Activated B cell treated with CpG ODN at 0.5 μM for 24 hours (primary cell): ENCODE measurements at regions of chr17 and their contacts with region 1.

Region 1: DNA sequence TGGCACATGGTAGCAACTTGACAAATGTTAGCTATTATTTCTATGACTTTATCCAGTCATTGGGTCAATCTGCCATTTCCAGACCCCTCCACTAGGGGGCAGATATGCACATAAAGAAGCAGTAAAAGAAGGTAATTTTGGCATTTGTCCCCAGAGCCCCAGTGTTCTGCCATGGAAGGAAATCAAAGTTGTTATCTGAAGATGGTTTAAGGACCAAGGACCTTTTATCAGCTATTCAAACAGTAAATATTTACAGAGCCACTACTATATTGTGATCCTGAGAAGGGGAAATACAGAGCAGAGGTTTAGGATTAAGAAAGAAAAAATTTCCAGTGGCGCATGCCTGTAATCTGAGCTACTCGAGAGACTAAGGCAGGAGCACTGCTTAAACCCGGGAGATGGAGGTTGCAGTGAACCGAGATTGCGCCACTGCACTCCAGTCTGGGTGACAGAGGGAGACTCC is 20.0 kb downstream of the TRAF4 start:
- DNase-seq: no peak
- ATAC-seq: peak; percentile 86
- H3K4me3 Mint-ChIP-seq: no peak overlapping the region
- H3K27ac Mint-ChIP-seq: no peak overlapping the region
- H3K4me1 Mint-ChIP-seq: peaks cover 10% of the 10 kb centered on the region
- H3K27me3 Mint-ChIP-seq: no peaks in the 10 kb centered on the region
- CTCF ChIP-seq: peak; percentile 80

Region 2: DNA sequence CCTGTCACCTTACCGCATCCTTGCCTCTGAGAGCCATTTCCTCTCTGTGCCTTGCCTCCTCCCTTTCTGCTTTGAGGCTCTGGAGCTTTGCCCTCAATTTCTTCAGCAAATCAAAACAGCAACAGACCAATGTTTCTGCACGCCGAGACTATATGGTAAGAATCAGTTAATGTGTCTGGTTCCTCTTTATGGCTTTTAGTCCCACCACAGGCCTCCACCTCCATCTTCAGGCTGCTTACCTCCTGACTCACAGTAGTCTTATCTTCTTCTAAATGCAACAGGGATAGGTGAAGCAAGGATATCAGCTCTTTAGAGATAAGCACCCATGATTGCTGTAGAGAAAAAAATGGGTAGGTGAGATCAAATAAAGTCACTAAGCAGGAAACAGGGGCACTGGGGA is 178.0 kb before region 1 on chr17:
- CTCF ChIA-PET with region 1: no interaction called
- POLR2A ChIA-PET with region 1: no interaction called
- intact Hi-C with region 1: no loop called
- DNase-seq: no peak
- ATAC-seq: no peak
- H3K4me3 Mint-ChIP-seq: no peak overlapping the region
- H3K27ac Mint-ChIP-seq: no peak overlapping the region
- H3K4me1 Mint-ChIP-seq: no peaks in the 10 kb centered on the region
- H3K27me3 Mint-ChIP-seq: no peaks in the 10 kb centered on the region
- CTCF ChIP-seq: no peak

Region 3: GRCh38 chr17:28705095-28705522 is 58.7 kb before region 1 on chr17:
- CTCF ChIA-PET with region 1: interaction called, 4 read pairs
- POLR2A ChIA-PET with region 1: interaction called, 13 read pairs
- intact Hi-C with region 1: no loop called
- DNase-seq: no peak
- ATAC-seq: no peak
- H3K4me3 Mint-ChIP-seq: no peak overlapping the region
- H3K27ac Mint-ChIP-seq: no peak overlapping the region
- H3K4me1 Mint-ChIP-seq: peaks cover 2% of the 10 kb centered on the region
- H3K27me3 Mint-ChIP-seq: no peaks in the 10 kb centered on the region
- CTCF ChIP-seq: no peak

Region 4: DNA sequence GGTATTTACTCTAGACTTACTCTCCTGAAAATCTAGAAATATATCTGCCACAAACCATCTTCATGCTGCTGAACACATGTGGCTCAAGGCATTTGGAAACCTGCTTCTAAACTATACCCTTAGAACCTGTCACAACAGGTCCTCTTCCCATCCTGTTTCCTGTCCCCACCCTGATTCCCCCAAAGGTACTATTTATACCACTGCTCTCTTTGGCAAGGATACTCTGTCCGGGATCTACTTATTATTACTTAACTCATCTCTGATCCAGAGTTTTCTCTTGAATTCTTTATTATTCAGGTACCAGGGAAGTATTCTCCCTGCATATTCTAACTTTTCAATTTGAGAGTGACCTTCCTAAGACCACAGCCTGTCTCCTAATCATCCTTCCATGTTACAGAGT is 13.3 kb after region 1 on chr17:
- CTCF ChIA-PET with region 1: interaction called, 26 read pairs
- POLR2A ChIA-PET with region 1: interaction called, 3 read pairs
- intact Hi-C with region 1: no loop called
- DNase-seq: no peak
- ATAC-seq: no peak
- H3K4me3 Mint-ChIP-seq: no peak overlapping the region
- H3K27ac Mint-ChIP-seq: no peak overlapping the region
- H3K4me1 Mint-ChIP-seq: peaks cover 32% of the 10 kb centered on the region
- H3K27me3 Mint-ChIP-seq: no peaks in the 10 kb centered on the region
- CTCF ChIP-seq: no peak

Region 5: DNA sequence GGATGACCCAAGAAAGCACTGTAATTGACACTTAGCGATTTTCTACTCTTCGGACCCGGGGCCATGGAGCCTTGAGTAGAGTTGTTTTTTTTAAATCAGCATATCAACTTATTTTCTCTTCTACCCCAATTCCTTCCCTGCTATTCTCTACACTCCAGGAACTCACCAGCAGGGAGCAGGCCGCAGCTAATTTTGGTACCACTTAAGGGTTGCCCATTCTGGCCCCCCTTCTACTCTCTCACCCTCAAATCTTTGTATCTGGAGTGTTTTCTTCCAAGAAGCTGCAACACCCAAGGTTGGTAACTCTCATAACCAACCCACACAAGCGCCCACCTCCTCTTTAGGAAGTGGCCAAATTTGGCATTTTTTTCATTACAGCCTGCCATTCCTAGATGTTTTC is 85.4 kb after region 1 on chr17:
- CTCF ChIA-PET with region 1: no interaction called
- POLR2A ChIA-PET with region 1: interaction called, 11 read pairs
- intact Hi-C with region 1: no loop called
- DNase-seq: no peak
- ATAC-seq: no peak
- H3K4me3 Mint-ChIP-seq: no peak overlapping the region
- H3K27ac Mint-ChIP-seq: no peak overlapping the region
- H3K4me1 Mint-ChIP-seq: peaks cover 3% of the 10 kb centered on the region
- H3K27me3 Mint-ChIP-seq: no peaks in the 10 kb centered on the region
- CTCF ChIP-seq: no peak

Region 6: DNA sequence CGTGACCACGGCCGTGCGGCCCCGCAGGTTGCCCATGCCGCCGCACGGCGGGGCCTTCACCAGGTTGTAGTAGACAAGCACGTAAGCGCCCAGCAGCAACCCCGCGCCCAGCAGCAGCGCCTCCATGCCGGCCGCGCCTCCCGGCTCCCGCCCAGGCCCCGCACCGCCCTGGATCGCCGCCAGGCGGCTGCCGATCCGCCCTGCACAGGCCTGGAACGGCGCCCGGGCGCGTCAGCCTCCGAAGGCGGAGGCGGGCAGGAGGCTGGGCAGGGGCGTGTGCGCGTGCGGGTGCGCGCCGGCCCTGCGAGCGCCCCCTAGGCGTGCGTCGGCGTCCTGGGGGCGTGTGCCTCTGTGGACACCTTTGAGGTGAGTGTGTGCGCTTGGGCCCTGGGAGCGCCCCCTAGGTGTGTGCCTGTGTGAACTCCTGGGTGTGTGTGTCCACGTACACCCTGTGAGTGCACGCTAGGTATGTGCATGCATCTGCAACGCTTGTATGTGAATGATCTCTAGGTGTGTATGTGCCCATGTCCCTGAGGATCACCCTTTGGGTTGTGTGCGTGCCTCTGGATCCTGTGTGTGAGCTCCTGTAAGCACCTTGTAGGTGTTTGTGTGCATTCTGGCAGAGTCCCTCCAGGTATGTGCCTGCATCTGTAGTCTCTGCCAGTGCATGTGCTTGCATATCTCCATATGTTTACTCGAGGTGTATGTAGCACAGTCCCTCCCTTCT is 139.1 kb after region 1 on chr17 and contains the start of gene DHRS13:
- CTCF ChIA-PET with region 1: interaction called, 90 read pairs
- POLR2A ChIA-PET with region 1: interaction called, 13 read pairs
- intact Hi-C with region 1: loop called (anchors 1 kb)
- DNase-seq: peak; percentile 97
- ATAC-seq: peak; percentile 90
- H3K4me3 Mint-ChIP-seq: peak within 1 kb of the TSS; percentile 82
- H3K27ac Mint-ChIP-seq: peak within 1 kb of the TSS; percentile 77
- H3K4me1 Mint-ChIP-seq: peaks cover 37% of the 10 kb centered on the region
- H3K27me3 Mint-ChIP-seq: no peaks in the 10 kb centered on the region
- CTCF ChIP-seq: peak; percentile 82
- total RNA-seq, gene DHRS13: 32.0 and 39.6 TPM in 2 replicates

Region 7: GRCh38 chr17:28937044-28937729 is 173.4 kb after region 1 on chr17:
- CTCF ChIA-PET with region 1: interaction called, 5 read pairs
- POLR2A ChIA-PET with region 1: interaction called, 10 read pairs
- intact Hi-C with region 1: no loop called
- DNase-seq: no peak
- ATAC-seq: no peak
- H3K4me3 Mint-ChIP-seq: no peak overlapping the region
- H3K27ac Mint-ChIP-seq: no peak overlapping the region
- H3K4me1 Mint-ChIP-seq: peaks cover 71% of the 10 kb centered on the region
- H3K27me3 Mint-ChIP-seq: no peaks in the 10 kb centered on the region
- CTCF ChIP-seq: no peak

Region 8: DNA sequence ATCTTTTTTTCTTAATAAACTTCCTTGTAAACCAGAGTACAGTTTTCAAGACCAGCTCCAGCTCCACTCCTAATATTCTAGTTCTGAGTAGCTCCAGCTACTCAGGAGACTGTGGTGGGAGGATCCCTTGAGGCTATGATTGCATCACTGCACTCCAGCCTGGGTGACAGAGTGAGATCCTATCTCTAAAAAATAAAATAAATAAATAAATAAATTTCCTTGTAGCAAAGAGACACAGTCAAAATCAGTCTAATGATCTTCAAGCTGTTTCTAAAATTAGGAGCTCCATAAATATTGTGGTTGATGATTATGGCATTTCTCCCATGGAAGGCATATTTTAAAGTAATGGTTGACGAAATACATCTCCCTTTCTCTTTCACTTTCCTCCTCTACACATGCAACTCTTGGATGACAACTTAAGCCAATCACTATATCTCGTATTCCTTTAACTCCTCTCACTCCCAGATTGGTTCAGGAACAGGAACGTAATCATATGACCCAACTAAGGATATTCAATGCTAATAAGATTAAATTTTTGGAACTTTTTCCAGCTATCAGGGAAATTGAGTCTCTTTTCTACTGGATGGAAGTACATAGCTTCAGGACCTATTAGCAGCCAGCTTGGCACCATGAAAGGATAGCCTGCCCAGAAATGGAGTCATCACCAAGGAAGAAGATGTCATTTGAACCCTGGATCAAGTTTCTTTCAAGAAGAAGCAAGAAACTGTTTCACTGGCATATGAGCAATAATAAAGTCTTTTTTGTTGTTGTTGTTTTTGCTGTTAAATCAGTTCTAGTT is 584.2 kb after region 1 on chr17:
- CTCF ChIA-PET with region 1: no interaction called
- POLR2A ChIA-PET with region 1: no interaction called
- intact Hi-C with region 1: no loop called
- DNase-seq: no peak
- ATAC-seq: no peak
- H3K4me3 Mint-ChIP-seq: no peak overlapping the region
- H3K27ac Mint-ChIP-seq: no peak overlapping the region
- H3K4me1 Mint-ChIP-seq: no peaks in the 10 kb centered on the region
- H3K27me3 Mint-ChIP-seq: peaks cover 3% of the 10 kb centered on the region
- CTCF ChIP-seq: no peak